Aorta (tissue), 5 donors: ENCODE measurements at regions of chr5 and their contacts with region 1.

Region 1: GRCh38 chr5:83473346-83474163 is 2.0 kb downstream of the VCAN start:
- DNase-seq: peak; percentile 96 to 97
- ATAC-seq: peak; percentile 91
- H3K4me3 ChIP-seq: peak overlapping the region; percentile 67 to 87
- H3K27ac ChIP-seq: peak overlapping the region; percentile 23 to 55
- H3K4me1 ChIP-seq: no peaks in the 10 kb centered on the region
- H3K27me3 ChIP-seq: no peaks in the 10 kb centered on the region

Region 2: GRCh38 chr5:82351754-82352145 is 1121.8 kb before region 1 on chr5:
- intact Hi-C with region 1: loop called (anchors 5 kb)
- DNase-seq: no peak
- ATAC-seq: peak; percentile 83
- H3K4me3 ChIP-seq: no peak overlapping the region
- H3K27ac ChIP-seq: peak overlapping the region in 1 of 2 donors; percentile 64
- H3K4me1 ChIP-seq: peaks cover 2 to 6% of the 10 kb centered on the region in 2 donors
- H3K27me3 ChIP-seq: no peaks in the 10 kb centered on the region

Region 3: GRCh38 chr5:82549263-82549662 is 924.3 kb before region 1 on chr5:
- intact Hi-C with region 1: loop called in 1 of 2 experiments (anchors 10 kb)
- DNase-seq: no peak
- ATAC-seq: no peak
- H3K4me3 ChIP-seq: no peak overlapping the region
- H3K27ac ChIP-seq: no peak overlapping the region
- H3K4me1 ChIP-seq: peaks cover 2 to 3% of the 10 kb centered on the region in 2 donors
- H3K27me3 ChIP-seq: no peaks in the 10 kb centered on the region

Region 4: GRCh38 chr5:82967072-82967471 is 506.5 kb before region 1 on chr5:
- intact Hi-C with region 1: no loop called
- DNase-seq: no peak
- ATAC-seq: no peak
- H3K4me3 ChIP-seq: no peak overlapping the region
- H3K27ac ChIP-seq: no peak overlapping the region
- H3K4me1 ChIP-seq: no peaks in the 10 kb centered on the region
- H3K27me3 ChIP-seq: no peaks in the 10 kb centered on the region

Region 5: DNA sequence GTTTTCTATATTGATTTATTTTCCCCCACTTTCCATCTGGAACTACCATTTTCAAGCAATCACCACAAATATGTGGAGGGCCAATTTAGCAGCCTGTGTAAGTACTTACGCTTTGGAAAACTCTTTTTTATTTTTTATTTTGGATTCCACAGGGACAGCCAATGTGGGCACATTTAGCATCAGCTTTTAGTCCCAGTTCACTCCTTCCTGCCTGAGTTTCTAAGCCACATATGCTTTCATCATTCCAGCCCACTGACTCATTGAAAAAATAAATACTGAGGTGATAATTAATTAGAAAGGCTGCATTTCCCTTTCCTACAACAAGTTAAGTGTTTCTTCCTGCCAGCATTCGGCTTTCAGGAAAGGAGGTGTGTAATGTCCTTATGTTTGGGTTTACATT is 473.1 kb before region 1 on chr5:
- intact Hi-C with region 1: no loop called
- DNase-seq: no peak
- ATAC-seq: no peak
- H3K4me3 ChIP-seq: no peak overlapping the region
- H3K27ac ChIP-seq: no peak overlapping the region
- H3K4me1 ChIP-seq: peaks cover 0 to 4% of the 10 kb centered on the region in 2 donors
- H3K27me3 ChIP-seq: no peaks in the 10 kb centered on the region

Region 6: DNA sequence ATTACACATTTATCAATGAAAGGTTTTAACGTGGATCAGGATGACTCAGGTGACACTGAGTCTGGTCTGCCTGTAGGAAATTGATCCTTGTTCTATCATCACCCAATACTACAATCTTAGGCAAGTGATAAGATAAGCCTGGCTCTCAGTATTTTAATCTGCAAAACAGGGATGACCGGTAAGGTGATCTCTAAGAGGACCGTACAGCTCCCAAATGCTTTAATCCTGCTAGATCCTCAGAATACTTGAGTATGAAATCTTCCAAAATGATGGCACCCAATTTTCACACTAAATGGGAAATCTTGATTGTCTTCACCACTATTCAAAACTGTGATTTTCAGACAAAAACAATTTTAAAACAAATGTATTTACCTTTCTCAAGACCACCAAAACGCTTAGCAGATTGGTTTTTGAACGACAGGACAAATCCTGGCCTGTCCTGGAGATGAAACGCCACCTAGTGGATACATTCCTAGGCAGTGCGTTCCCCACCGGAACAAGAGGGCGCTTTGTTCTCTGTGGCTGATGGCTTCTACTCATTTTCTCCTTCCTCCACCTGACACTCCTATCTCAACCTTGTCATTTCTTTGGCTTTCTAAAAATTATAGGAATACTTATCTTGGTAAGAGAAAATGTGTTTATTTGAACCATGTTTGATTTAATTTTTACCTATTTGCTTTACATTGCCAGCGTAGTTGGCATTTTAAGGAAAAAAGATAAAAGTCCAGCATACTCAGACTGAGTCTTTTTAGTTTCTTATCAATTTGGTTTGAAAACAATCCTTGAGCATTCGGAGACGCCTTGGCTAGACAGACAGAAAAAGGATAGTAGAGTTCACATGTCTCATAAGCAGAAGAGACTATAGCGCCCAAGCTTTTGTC is 43.2 kb before region 1 on chr5:
- intact Hi-C with region 1: loop called (anchors 5 kb)
- DNase-seq: peak in 1 of 2 donors; percentile 57
- ATAC-seq: peak; percentile 73
- H3K4me3 ChIP-seq: no peak overlapping the region
- H3K27ac ChIP-seq: no peak overlapping the region
- H3K4me1 ChIP-seq: peaks cover 0 to 2% of the 10 kb centered on the region in 2 donors
- H3K27me3 ChIP-seq: no peaks in the 10 kb centered on the region